ENCODE measurements at regions of chr9 and their contacts with region 1.

Region 1: GRCh38 chr9:35826071-35826701 is 2.3 kb downstream of the FAM221B start:
- DNase-seq: no peak
- H3K4me3 ChIP-seq: no peak overlapping the region
- H3K27ac ChIP-seq: no peak overlapping the region
- H3K27me3 ChIP-seq: peaks cover 2% of the 10 kb centered on the region
- CTCF ChIP-seq: peak; percentile 85

Region 2: DNA sequence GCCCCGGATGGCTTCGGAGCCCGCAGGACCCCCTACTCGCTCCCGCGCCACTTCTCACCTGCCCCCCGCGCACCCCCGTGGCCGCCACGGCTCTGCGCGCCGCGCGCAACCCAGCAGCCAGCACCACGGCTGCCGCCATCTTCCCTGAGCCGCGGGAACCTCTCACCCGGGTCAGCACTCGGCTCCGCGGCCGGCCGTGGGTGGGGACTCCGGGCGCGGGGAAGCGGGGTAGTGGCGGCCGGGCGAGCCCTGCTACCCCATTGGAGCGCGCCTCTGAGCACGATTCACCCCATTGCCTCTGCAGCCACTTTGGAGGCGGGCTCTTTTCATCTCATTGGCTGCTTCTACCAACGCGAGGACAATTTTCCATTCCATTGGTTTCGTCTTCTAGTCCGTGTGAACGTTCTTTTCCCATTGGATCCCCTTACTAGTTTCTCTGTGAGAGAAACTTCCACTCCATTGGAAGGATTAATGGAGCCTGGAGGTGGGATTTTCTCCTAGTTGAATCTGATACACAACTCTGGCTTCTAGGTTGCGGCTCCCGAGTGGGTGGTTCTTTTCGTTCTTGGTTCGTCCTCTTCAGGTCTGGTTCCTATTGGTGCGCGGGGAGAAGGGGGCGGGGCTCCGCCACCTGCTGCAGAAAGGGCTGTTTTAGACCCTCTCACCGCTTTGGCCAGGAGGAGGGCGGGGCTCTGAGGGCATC is 11.2 kb before region 1 on chr9 and contains the start of gene HINT2:
- CTCF ChIA-PET with region 1: interaction called, 14 read pairs
- POLR2A ChIA-PET with region 1: interaction called, 4 read pairs
- DNase-seq: peak; percentile 97
- H3K4me3 ChIP-seq: peak within 1 kb of the TSS; percentile 87
- H3K27ac ChIP-seq: peak within 1 kb of the TSS; percentile 70
- H3K27me3 ChIP-seq: peaks cover 6% of the 10 kb centered on the region
- CTCF ChIP-seq: no peak
- polyA plus RNA-seq, gene HINT2: 17.5 and 18.5 TPM in 2 replicates

Region 3: DNA sequence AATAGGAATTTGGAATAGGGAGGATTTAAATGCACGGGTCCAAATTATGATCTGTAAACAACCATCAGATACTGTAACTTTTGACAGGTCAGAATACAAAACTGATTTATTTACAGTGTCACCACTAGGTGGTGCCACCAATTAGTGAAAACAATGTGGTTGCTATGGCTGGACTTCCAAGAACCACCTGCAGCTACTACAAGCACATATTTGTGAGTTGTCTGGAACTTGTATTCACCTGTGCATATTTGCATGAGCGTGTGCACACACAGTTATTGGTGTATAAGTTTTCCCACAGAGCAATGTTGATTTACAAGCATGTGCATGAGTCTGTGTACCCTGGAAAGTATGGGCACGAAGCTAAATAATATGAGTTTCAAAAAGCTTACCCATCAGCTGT is 76.9 kb after region 1 on chr9:
- CTCF ChIA-PET with region 1: interaction called, 11 read pairs
- POLR2A ChIA-PET with region 1: no interaction called
- DNase-seq: no peak
- H3K4me3 ChIP-seq: no peak overlapping the region
- H3K27ac ChIP-seq: no peak overlapping the region
- H3K27me3 ChIP-seq: peaks cover 10% of the 10 kb centered on the region
- CTCF ChIP-seq: peak; percentile 54

Measured in AG04450 (cell line).